CD4-positive, alpha-beta T cell (primary cell): ENCODE measurements at regions of chr5 and their contacts with region 1.

Region 1: GRCh38 chr5:172806897-172807672 is 27.0 kb upstream of the ERGIC1 start:
- DNase-seq: peak; percentile 56 to 96 (median 74)
- ATAC-seq: peak; percentile 96
- H3K4me3 ChIP-seq: peak overlapping the region; percentile 42
- H3K4me3 Mint-ChIP-seq: peak overlapping the region; percentile 76
- H3K27ac ChIP-seq: peak overlapping the region in 1 of 2 donors; percentile 43
- H3K27ac Mint-ChIP-seq: peak overlapping the region; percentile 84
- H3K4me1 ChIP-seq: peaks cover 14% of the 10 kb centered on the region
- H3K4me1 Mint-ChIP-seq: peaks cover 12% of the 10 kb centered on the region
- H3K27me3 ChIP-seq: no peaks in the 10 kb centered on the region
- H3K27me3 Mint-ChIP-seq: no peaks in the 10 kb centered on the region
- CTCF ChIP-seq: no peak

Region 2: DNA sequence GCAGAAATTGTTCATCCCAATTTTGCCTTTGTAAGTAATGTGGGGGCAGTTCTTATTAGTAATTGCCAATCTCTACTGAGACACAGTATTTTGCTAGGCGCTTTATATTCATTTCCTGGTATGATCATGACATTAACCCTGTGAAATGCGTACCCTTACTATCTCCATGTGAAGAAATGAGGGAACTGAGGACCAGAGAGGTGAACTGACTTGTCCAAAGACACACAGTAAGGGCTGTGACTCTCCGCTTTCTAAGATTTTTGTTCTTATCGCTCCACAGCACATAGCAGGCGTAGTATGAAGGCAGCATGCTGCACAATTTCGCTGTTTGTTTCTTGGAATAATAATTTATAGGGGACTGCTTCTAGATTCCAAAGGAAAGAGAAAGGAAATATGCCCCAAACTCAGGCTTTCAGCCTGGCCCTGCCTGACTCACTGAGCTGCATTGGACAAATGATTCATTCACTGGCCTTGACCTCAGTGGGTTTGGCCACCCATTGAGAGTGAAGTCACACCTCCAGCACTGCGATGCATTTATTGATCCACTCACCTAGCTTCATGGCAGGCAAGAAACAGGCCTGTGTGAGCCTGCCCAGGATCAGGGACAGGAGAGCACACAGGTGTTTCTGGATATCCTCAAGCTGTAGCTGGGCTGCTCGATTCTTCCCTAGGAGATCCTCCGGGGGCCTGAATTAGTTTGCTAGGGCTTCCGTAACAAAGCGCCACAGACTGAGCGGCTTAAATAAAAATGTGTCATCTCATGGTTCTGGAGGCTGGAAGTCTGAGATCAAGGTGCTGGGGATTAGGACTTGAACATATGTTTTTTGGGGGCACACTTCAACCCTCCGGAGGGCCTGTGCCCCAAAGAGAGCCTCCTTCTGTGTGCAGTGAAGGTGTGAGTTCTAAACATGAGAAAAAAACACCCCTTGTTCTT is 28.9 kb before region 1 on chr5:
- CTCF ChIA-PET with region 1: no interaction called
- POLR2A ChIA-PET with region 1: interaction called, 41 read pairs
- intact Hi-C with region 1: loop called (anchors 5 kb)
- DNase-seq: peak in 3 of 14 experiments; percentile 22 to 64 (median 54)
- ATAC-seq: peak; percentile 56
- H3K4me3 ChIP-seq: peak overlapping the region; percentile 27
- H3K4me3 Mint-ChIP-seq: peak overlapping the region; percentile 68
- H3K27ac ChIP-seq: peak overlapping the region; percentile 68 to 93
- H3K27ac Mint-ChIP-seq: peak overlapping the region; percentile 95
- H3K4me1 ChIP-seq: peaks cover 43% of the 10 kb centered on the region
- H3K4me1 Mint-ChIP-seq: peaks cover 45% of the 10 kb centered on the region
- H3K27me3 ChIP-seq: no peaks in the 10 kb centered on the region
- H3K27me3 Mint-ChIP-seq: no peaks in the 10 kb centered on the region
- CTCF ChIP-seq: no peak